PC-9 (cell line): ENCODE measurements at regions of chr5 and their contacts with region 1.

Region 1: DNA sequence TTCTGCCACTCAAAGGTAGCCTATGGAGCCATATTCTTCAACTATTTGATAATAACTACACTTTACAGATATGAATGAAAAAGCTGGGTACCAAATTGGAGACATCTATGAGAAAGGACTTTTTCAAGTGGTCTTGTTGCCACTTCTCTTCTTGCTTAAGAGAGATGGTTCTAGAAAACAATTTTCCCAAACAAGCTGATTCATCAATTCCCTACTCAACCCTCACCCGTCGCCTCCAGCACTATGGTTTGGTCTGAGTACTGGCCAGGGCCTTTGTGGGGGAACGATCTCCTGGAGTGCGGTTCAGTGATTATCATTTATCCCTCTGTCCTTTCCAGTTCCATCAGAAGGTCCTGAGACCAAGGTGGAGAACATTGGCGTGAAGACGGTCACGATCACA is 56.8 kb downstream of the IL31RA start:
- DNase-seq: no peak
- H3K4me3 ChIP-seq: no peak overlapping the region
- H3K27ac ChIP-seq: no peak overlapping the region
- H3K4me1 ChIP-seq: peaks cover 11% of the 10 kb centered on the region; the same call in 1 of the 2 replicates
- H3K27me3 ChIP-seq: no peaks in the 10 kb centered on the region
- CTCF ChIP-seq: no peak

Region 2: DNA sequence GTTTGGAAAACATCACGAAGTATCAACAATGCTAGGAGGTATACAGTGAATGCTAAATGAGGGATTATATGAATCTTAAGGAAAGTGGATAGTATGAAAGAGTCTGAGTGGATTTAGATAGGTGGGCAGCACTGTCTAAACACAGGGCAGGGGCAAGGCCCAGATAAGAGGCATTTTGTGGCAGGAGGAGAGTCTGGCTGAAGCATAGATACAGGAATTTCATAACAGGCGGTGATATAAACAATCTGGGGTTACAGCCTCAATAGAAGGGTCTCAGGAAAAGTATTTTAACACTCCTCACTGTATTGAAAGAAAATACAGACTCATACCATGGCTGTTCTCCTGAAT is 470.1 kb before region 1 on chr5:
- CTCF ChIA-PET with region 1: no interaction called
- POLR2A ChIA-PET with region 1: interaction called, 11 read pairs
- intact Hi-C with region 1: no loop called
- DNase-seq: peak in 1 of 2 experiments; percentile 11
- H3K4me3 ChIP-seq: peak overlapping the region; percentile 11
- H3K27ac ChIP-seq: peak overlapping the region; percentile 71
- H3K4me1 ChIP-seq: peaks cover 29% of the 10 kb centered on the region
- H3K27me3 ChIP-seq: no peaks in the 10 kb centered on the region
- CTCF ChIP-seq: no peak